CD8-positive, alpha-beta T cell (primary cell): ENCODE measurements at regions of chr17 and their contacts with region 1.

Region 1: DNA sequence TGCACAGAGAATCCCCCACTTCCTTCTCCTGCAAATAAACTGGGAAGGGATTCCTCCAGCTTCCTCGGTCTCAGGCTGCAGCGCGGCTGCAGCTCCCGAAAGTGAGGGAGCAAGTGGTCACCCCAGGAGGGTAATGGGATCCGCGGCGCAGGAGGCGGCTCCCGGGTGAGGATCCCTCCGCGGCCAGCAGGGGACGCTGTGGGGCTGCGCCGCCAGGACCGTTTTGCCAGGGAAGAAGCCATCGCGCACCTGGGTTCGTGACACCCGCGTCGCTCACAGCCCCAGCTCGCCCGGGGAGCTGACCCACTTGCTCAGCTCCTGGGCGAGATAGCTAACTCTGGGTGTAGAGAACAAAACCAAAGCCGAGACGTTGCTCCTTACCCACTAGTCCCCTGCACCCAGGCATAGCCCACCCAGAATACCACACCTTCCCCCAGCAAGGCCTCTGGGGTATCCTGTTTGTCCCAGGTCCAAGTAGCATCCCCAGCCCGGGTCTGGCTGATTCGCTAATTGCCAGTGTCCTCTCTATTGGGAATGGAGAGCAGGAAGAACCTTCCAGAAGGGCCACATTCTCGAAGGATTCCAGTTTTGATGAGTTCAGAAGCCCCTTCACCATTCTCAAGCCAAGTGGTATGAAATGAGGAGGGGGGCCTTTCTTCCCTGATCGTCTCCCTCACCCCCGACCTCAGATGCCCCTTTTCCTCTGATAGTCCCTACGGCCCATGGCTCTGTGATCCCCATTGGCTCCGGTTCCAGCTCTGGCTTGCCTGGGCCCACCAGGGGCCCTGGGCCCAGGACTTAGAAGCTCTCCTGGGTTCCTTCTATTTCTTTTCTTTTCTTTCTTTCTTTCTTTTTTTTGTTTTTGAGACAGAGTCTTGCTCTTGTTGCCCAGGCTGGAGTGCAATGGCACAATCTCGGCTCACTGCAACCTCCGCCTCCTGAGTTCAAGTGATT is 14.1 kb downstream of the CYGB start:
- DNase-seq: peak; percentile 64 to 93 (median 81)
- ATAC-seq: peak; percentile 79
- H3K4me3 ChIP-seq: no peak overlapping the region
- H3K4me3 Mint-ChIP-seq: peak overlapping the region; percentile 43
- H3K27ac ChIP-seq: no peak overlapping the region
- H3K27ac Mint-ChIP-seq: peak overlapping the region; percentile 84
- H3K4me1 ChIP-seq: peaks cover 23% of the 10 kb centered on the region
- H3K4me1 Mint-ChIP-seq: peaks cover 25% of the 10 kb centered on the region
- H3K27me3 ChIP-seq: no peaks in the 10 kb centered on the region
- H3K27me3 Mint-ChIP-seq: no peaks in the 10 kb centered on the region
- CTCF ChIP-seq: peak; percentile 99

Region 2: DNA sequence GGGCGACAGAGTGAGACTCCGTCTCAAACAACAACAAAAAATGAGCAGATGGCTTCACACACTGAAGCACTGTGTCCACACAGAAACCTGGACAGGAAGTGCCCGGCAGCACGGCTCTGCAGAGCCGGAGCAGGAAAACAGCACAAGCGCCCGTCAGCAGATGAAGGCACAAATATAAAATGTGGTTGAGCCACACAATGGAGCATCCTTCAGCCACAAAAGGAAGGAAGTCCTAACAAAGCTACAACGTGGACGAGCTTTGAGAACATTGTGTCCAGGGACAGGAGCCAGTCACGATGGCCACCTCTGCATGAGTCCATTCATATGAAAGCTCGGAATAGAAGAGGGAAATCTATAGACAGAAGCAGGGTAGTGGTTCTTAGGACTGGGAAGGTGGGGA is 37.8 kb before region 1 on chr17:
- CTCF ChIA-PET with region 1: no interaction called
- POLR2A ChIA-PET with region 1: no interaction called
- intact Hi-C with region 1: no loop called
- DNase-seq: no peak
- ATAC-seq: no peak
- H3K4me3 ChIP-seq: no peak overlapping the region
- H3K4me3 Mint-ChIP-seq: no peak overlapping the region
- H3K27ac ChIP-seq: no peak overlapping the region
- H3K27ac Mint-ChIP-seq: no peak overlapping the region
- H3K4me1 ChIP-seq: peaks cover 9% of the 10 kb centered on the region
- H3K4me1 Mint-ChIP-seq: peaks cover 11% of the 10 kb centered on the region
- H3K27me3 ChIP-seq: no peaks in the 10 kb centered on the region
- H3K27me3 Mint-ChIP-seq: no peaks in the 10 kb centered on the region
- CTCF ChIP-seq: no peak

Region 3: GRCh38 chr17:76506408-76507349 is 16.7 kb before region 1 on chr17:
- CTCF ChIA-PET with region 1: interaction called, 71 read pairs
- POLR2A ChIA-PET with region 1: interaction called, 3 read pairs
- intact Hi-C with region 1: no loop called
- DNase-seq: peak; percentile 80 to 96 (median 90)
- ATAC-seq: peak; percentile 84
- H3K4me3 ChIP-seq: no peak overlapping the region
- H3K4me3 Mint-ChIP-seq: no peak overlapping the region
- H3K27ac ChIP-seq: no peak overlapping the region
- H3K27ac Mint-ChIP-seq: peak overlapping the region; percentile 22
- H3K4me1 ChIP-seq: peaks cover 19% of the 10 kb centered on the region
- H3K4me1 Mint-ChIP-seq: peaks cover 24% of the 10 kb centered on the region
- H3K27me3 ChIP-seq: no peaks in the 10 kb centered on the region
- H3K27me3 Mint-ChIP-seq: no peaks in the 10 kb centered on the region
- CTCF ChIP-seq: peak; percentile 93

Region 4: DNA sequence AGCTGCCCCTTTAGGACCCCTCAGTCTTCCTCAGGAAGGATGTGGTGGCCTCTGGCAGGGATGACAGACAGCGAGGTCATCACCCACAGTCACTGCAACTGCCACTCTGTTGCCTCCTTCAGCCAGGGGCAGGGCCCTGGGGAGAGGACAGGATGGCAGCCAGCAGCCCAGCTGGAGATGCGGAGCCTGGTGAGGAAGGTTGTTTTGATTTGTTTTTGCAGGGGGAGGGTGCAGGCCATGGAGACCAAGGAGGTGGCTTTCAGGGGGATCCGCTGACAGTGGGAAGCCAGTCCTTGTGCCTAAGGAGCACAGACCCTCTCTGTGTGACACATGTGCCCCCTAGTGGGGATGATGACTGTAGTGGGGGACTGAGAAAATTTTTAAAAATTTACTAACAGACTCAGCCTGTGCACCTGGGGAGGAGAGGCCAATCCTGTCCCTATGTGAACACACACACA is 23.9 kb after region 1 on chr17:
- CTCF ChIA-PET with region 1: interaction called, 176 read pairs
- POLR2A ChIA-PET with region 1: interaction called, 4 read pairs
- intact Hi-C with region 1: loop called (anchors 1 kb)
- DNase-seq: peak; percentile 30 to 83 (median 72)
- ATAC-seq: peak; percentile 94
- H3K4me3 ChIP-seq: no peak overlapping the region
- H3K4me3 Mint-ChIP-seq: no peak overlapping the region
- H3K27ac ChIP-seq: no peak overlapping the region
- H3K27ac Mint-ChIP-seq: no peak overlapping the region
- H3K4me1 ChIP-seq: peaks cover 7% of the 10 kb centered on the region
- H3K4me1 Mint-ChIP-seq: peaks cover 11% of the 10 kb centered on the region
- H3K27me3 ChIP-seq: no peaks in the 10 kb centered on the region
- H3K27me3 Mint-ChIP-seq: peaks cover 8% of the 10 kb centered on the region
- CTCF ChIP-seq: peak; percentile 62

Region 5: GRCh38 chr17:76567634-76568432 is 44.5 kb after region 1 on chr17:
- CTCF ChIA-PET with region 1: interaction called, 18 read pairs
- POLR2A ChIA-PET with region 1: interaction called, 3 read pairs
- intact Hi-C with region 1: no loop called
- DNase-seq: peak in 2 of 9 experiments; percentile 50 to 69
- ATAC-seq: peak; percentile 35
- H3K4me3 ChIP-seq: no peak overlapping the region
- H3K4me3 Mint-ChIP-seq: no peak overlapping the region
- H3K27ac ChIP-seq: peak overlapping the region in 1 of 2 experiments; percentile 28
- H3K27ac Mint-ChIP-seq: peak overlapping the region; percentile 60
- H3K4me1 ChIP-seq: peaks cover 19% of the 10 kb centered on the region
- H3K4me1 Mint-ChIP-seq: peaks cover 39% of the 10 kb centered on the region
- H3K27me3 ChIP-seq: no peaks in the 10 kb centered on the region
- H3K27me3 Mint-ChIP-seq: no peaks in the 10 kb centered on the region
- CTCF ChIP-seq: no peak

Region 6: DNA sequence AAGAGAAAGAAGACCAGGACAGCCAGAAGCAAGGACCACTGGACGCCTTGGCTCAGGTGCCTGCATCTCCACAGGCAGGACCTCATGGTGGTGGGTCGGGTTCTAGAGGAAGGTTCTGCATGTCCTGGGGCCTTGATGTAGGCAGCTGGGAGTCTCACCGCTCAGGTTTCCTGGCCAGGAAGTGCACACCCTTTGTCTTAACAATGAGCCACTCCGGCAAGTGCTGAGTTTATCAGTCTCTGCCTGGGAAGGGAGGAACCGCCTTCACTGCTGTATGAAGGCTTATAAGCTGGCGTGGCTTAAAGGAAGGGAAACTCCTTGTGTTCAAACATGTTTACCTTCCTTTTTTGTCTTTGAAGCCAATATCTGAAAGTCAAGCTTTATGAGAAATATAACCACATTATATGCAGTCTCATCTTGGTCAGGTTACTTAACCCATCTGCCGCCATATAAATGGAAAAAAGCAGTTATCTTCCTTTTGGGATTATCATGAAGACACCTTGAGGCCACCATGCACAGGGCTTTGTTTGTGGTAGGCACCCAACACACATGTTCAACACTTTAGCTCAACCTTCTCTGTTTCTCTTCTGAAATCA is 120.3 kb after region 1 on chr17 and contains the start of gene ST6GALNAC1:
- CTCF ChIA-PET with region 1: no interaction called
- POLR2A ChIA-PET with region 1: no interaction called
- intact Hi-C with region 1: no loop called
- DNase-seq: peak in 4 of 9 experiments; percentile 15 to 53 (median 29)
- ATAC-seq: peak; percentile 62
- H3K4me3 ChIP-seq: no peak within 1 kb of the TSS
- H3K4me3 Mint-ChIP-seq: no peak within 1 kb of the TSS
- H3K27ac ChIP-seq: no peak within 1 kb of the TSS
- H3K27ac Mint-ChIP-seq: no peak within 1 kb of the TSS
- H3K4me1 ChIP-seq: peaks cover 10% of the 10 kb centered on the region
- H3K4me1 Mint-ChIP-seq: peaks cover 13% of the 10 kb centered on the region
- H3K27me3 ChIP-seq: no peaks in the 10 kb centered on the region
- H3K27me3 Mint-ChIP-seq: peaks cover 3% of the 10 kb centered on the region
- CTCF ChIP-seq: no peak
- total RNA-seq, gene ST6GALNAC1: not detected

Region 7: GRCh38 chr17:76681222-76682137 is 158.1 kb after region 1 on chr17:
- CTCF ChIA-PET with region 1: interaction called, 71 read pairs
- POLR2A ChIA-PET with region 1: interaction called, 3 read pairs
- intact Hi-C with region 1: loop called (anchors 1 kb)
- DNase-seq: peak; percentile 55 to 86 (median 79)
- ATAC-seq: peak; percentile 78
- H3K4me3 ChIP-seq: no peak overlapping the region
- H3K4me3 Mint-ChIP-seq: no peak overlapping the region
- H3K27ac ChIP-seq: peak overlapping the region in 1 of 2 experiments; percentile 39
- H3K27ac Mint-ChIP-seq: no peak overlapping the region
- H3K4me1 ChIP-seq: peaks cover 29% of the 10 kb centered on the region
- H3K4me1 Mint-ChIP-seq: peaks cover 11% of the 10 kb centered on the region
- H3K27me3 ChIP-seq: no peaks in the 10 kb centered on the region
- H3K27me3 Mint-ChIP-seq: no peaks in the 10 kb centered on the region
- CTCF ChIP-seq: peak; percentile 77